ENCODE measurements at regions of chr10 and their contacts with region 1.

Region 1: GRCh38 chr10:120221873-120222485 is 235.0 kb upstream of the PLPP4 start:
- DNase-seq: no peak
- H3K4me3 Mint-ChIP-seq: no peak overlapping the region
- H3K27ac Mint-ChIP-seq: no peak overlapping the region
- H3K4me1 Mint-ChIP-seq: no peaks in the 10 kb centered on the region
- H3K27me3 Mint-ChIP-seq: no peaks in the 10 kb centered on the region

Region 2: GRCh38 chr10:120204877-120205276 is 17.1 kb before region 1 on chr10:
- CTCF ChIA-PET with region 1: no interaction called
- POLR2A ChIA-PET with region 1: no interaction called
- DNase-seq: no peak
- H3K4me3 Mint-ChIP-seq: no peak overlapping the region
- H3K27ac Mint-ChIP-seq: no peak overlapping the region
- H3K4me1 Mint-ChIP-seq: no peaks in the 10 kb centered on the region
- H3K27me3 Mint-ChIP-seq: peaks cover 5% of the 10 kb centered on the region

Region 3: DNA sequence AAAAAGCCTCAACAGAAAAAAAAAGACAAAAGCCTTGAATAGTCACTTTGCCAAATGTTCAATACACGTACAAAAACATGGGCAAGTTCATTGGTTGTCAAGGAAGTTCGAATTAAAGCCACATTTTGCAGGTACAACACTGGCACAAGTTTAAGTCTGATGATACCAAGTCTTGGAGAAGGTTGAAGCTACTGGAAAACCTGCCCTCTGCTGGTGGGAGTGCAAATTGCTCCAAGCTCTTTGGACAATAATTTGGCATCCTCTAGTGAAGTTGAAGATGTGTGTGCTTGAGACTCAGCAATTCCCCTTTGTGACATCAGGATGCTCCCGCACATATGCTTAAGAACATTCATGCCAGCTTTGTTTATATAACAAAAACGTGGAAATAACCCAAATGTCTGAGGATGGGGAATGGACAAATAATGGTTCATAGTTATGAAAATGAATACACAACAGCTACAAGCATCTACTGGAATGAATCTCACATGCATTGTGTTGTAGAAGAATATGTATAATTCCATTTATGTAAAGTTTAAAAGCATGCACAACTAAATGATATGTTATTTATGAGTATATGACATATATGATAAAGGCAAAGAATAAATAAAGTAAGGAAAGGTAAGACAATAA is 115.0 kb after region 1 on chr10:
- CTCF ChIA-PET with region 1: interaction called, 14 read pairs
- POLR2A ChIA-PET with region 1: no interaction called
- DNase-seq: peak; percentile 56
- H3K4me3 Mint-ChIP-seq: no peak overlapping the region
- H3K27ac Mint-ChIP-seq: no peak overlapping the region
- H3K4me1 Mint-ChIP-seq: no peaks in the 10 kb centered on the region
- H3K27me3 Mint-ChIP-seq: peaks cover 6% of the 10 kb centered on the region

Region 4: GRCh38 chr10:120436431-120437112 is 214.6 kb after region 1 on chr10:
- CTCF ChIA-PET with region 1: no interaction called
- POLR2A ChIA-PET with region 1: no interaction called
- DNase-seq: no peak
- H3K4me3 Mint-ChIP-seq: no peak overlapping the region
- H3K27ac Mint-ChIP-seq: no peak overlapping the region
- H3K4me1 Mint-ChIP-seq: no peaks in the 10 kb centered on the region
- H3K27me3 Mint-ChIP-seq: peaks cover 8% of the 10 kb centered on the region

Measured in activated CD4-positive, alpha-beta memory T cell treated with anti-CD3 and anti-CD28 coated beads, Interleukin-2, amount 10 ng/mL, durations not matched to agents 7 days and 5 days (primary cell).